Right ventricle myocardium inferior (tissue), 1 donor: ENCODE measurements at regions of chr5 and their contacts with region 1.

Region 1: GRCh38 chr5:154405078-154405792 is 40.6 kb upstream of the SAP30L start:
- DNase-seq: peak; percentile 89
- ATAC-seq: peak; percentile 96

Region 2: GRCh38 chr5:153974131-153974812 is 431.0 kb before region 1 on chr5:
- intact Hi-C with region 1: loop called (anchors 5 kb)
- DNase-seq: no peak
- ATAC-seq: peak; percentile 17

Region 3: DNA sequence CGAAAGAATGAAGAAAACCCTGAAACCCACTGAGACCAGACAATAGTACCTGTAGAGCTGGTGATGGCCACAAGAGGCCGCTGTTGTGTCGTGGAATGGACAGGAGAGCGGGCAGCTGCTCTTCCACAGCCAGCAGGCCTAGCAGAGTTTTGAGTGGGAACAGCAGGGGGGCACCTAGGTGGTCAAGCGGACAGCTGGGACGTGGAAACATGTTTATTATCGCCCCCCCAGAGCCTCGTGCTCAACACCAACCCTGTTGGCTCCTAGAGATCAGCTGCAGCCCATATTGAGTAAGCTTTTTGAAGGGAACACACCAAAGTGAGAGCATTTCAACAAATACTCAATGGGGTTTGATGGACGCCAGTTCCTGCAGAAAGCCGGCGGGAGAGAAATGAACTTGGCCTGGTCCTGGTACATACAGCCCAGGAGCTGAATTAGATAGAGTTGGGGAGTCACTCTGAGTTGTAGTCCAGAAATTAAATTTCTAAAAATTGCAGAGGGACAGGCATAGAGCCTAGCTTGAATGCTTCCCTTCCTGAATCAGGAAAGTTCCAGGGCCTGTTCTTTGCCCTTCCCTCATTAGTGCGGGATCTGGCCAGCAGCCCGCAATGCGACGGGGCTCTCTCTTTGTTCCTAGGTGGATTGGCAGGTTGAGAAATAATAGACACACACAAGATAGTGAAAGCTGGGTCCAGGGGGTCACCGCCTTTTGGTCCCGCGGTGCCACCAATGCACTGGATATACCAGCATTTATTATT is 332.6 kb before region 1 on chr5:
- intact Hi-C with region 1: loop called (anchors 1 kb)
- DNase-seq: peak; percentile 87
- ATAC-seq: peak; percentile 93

Region 4: GRCh38 chr5:154189819-154190594 is 215.2 kb before region 1 on chr5:
- intact Hi-C with region 1: loop called (anchors 1 kb)
- DNase-seq: peak; percentile 93
- ATAC-seq: peak; percentile 90